Left lung (tissue), 14 donors: ENCODE measurements at regions of chrX and their contacts with region 1.

Region 1: GRCh38 chrX:9341291-9342201 is 123.3 kb upstream of the TBL1X start:
- DNase-seq: peak in 3 of 4 donors; percentile 54 to 84 (median 79)
- ATAC-seq: peak; percentile 56
- H3K4me3 ChIP-seq: no peak overlapping the region
- H3K27ac ChIP-seq: peak overlapping the region; percentile 69 to 96
- H3K4me1 ChIP-seq: peaks cover 0 to 20% of the 10 kb centered on the region in 2 donors
- H3K27me3 ChIP-seq: no peaks in the 10 kb centered on the region
- CTCF ChIP-seq: no peak

Region 2: DNA sequence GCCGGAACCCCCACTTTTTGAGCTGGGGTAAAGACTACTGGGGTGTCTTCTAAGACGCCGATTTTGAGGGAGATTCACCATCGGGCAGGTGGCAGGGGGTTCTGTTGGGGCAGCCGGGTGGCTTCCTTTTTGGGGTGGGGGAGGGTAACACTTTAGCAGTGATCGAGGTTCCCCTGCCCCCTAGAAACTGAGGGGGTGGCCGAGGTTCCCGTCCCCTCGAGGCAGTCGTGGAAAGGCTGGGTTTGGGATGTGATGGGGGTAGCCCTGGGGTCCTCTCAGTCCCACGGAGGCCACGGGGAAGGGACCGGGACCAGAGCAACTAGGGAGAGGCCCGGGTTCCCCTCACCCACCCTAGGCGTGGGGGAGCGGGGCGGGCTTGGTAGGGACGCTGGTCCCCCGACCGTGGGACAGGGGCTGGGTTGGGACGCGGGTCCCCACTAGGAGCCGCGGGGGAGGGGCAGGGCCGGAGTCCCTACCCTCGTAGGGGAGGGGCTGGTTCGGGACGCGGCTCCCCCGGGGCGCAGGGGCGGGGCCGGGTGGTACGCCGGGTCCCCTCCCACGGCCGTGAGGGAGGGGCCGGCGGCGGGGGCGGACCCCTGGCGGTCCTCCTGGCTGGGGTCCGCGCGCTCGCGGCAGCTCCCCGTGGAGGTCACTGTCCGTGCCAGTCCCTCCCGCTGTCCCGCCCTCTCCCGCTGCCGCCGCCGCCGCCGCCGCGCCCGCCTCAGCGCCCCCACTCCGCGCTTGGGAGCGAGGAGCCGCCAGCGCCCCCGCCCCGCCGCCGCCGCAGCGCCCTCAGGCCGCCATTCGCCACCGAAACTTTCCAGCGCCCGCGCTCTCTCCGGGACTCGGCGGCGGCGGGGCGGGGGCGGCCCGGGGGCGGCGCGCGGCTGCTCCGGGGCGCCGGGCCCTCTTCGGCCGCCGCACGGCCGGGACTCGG is 123.2 kb after region 1 on chrX and contains the start of gene TBL1X:
- intact Hi-C with region 1: loop called in 1 of 2 experiments (anchors 5 kb)
- DNase-seq: peak; percentile 27 to 90 (median 50)
- ATAC-seq: peak; percentile 47
- H3K4me3 ChIP-seq: peak within 1 kb of the TSS; percentile 50 to 54
- H3K27ac ChIP-seq: peak within 1 kb of the TSS in 1 of 2 donors; percentile 79
- H3K4me1 ChIP-seq: peaks cover 6 to 35% of the 10 kb centered on the region in 2 donors
- H3K27me3 ChIP-seq: peaks cover 0 to 19% of the 10 kb centered on the region in 2 donors
- CTCF ChIP-seq: no peak
- polyA plus RNA-seq, gene TBL1X: 20.3 to 24.6 (median 22.7) TPM